Caco-2 (cell line): ENCODE measurements at regions of chr1 and their contacts with region 1.

Region 1: GRCh38 chr1:43171876-43172526 is at the starts of genes CFAP57 and EBNA1BP2:
- DNase-seq: peak; percentile 87 to 90
- H3K4me3 ChIP-seq: peak within 1 kb of the TSS; percentile 83
- H3K4me3 Mint-ChIP-seq: peak within 1 kb of the TSS; percentile 99
- H3K27ac Mint-ChIP-seq: peak within 1 kb of the TSS; percentile 99
- H3K4me1 ChIP-seq: peaks cover 3% of the 10 kb centered on the region
- H3K4me1 Mint-ChIP-seq: peaks cover 7% of the 10 kb centered on the region
- H3K27me3 ChIP-seq: no peaks in the 10 kb centered on the region
- H3K27me3 Mint-ChIP-seq: peaks cover 11% of the 10 kb centered on the region
- CTCF ChIP-seq: no peak
- total RNA-seq, gene CFAP57: 0.23 and 0.35 TPM in 2 replicates
- total RNA-seq, gene EBNA1BP2: 56.3 and 61.6 TPM in 2 replicates

Region 2: GRCh38 chr1:42793824-42794223 is 378.2 kb before region 1 on chr1:
- CTCF ChIA-PET with region 1: no interaction called
- POLR2A ChIA-PET with region 1: no interaction called
- intact Hi-C with region 1: no loop called
- DNase-seq: no peak
- H3K4me3 ChIP-seq: no peak overlapping the region
- H3K4me3 Mint-ChIP-seq: no peak overlapping the region
- H3K27ac Mint-ChIP-seq: no peak overlapping the region
- H3K4me1 ChIP-seq: no peaks in the 10 kb centered on the region
- H3K4me1 Mint-ChIP-seq: no peaks in the 10 kb centered on the region
- H3K27me3 ChIP-seq: no peaks in the 10 kb centered on the region
- H3K27me3 Mint-ChIP-seq: no peaks in the 10 kb centered on the region
- CTCF ChIP-seq: no peak

Region 3: DNA sequence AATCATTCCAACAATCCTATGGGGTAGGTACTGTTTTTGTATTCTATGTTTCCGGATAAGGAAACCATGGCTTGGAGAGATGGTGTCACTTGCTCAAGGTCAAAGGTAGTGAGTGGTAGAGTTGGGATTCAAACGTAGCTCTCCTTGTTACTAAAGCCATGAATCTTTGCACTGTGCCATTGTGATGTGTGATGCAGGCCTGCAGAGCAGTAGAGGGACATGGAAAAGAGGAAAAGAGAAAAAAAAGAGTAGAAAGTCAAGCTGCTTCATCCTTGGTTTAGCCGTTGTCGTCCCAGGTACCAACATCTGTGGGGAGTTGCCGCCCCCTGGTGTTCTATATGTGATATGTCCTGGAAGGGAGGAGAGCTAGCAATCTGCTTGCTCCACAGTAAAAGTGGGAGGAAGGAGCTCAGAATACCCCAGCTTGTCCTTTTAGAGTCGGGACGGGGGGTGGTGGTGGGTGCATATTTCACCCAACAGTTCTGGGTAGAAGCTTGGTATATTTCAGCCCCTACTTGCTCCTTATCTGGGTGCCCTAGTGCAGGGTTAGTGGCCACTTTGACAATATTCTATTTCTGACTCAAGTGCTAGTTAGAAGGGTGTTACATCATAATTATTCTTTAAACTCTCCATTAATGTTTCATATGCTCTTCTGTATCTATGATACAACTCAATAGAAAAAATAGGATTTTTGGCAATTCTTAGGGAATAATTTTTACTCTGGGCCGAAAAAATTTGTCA is 98.3 kb before region 1 on chr1:
- CTCF ChIA-PET with region 1: no interaction called
- POLR2A ChIA-PET with region 1: no interaction called
- intact Hi-C with region 1: no loop called
- DNase-seq: peak; percentile 79 to 80
- H3K4me3 ChIP-seq: no peak overlapping the region
- H3K4me3 Mint-ChIP-seq: no peak overlapping the region
- H3K27ac Mint-ChIP-seq: no peak overlapping the region
- H3K4me1 ChIP-seq: peaks cover 52% of the 10 kb centered on the region
- H3K4me1 Mint-ChIP-seq: peaks cover 36% of the 10 kb centered on the region
- H3K27me3 ChIP-seq: no peaks in the 10 kb centered on the region
- H3K27me3 Mint-ChIP-seq: no peaks in the 10 kb centered on the region
- CTCF ChIP-seq: peak; percentile 63 to 83

Region 4: GRCh38 chr1:43107664-43108063 is 64.3 kb before region 1 on chr1:
- CTCF ChIA-PET with region 1: no interaction called
- POLR2A ChIA-PET with region 1: no interaction called
- intact Hi-C with region 1: no loop called
- DNase-seq: no peak
- H3K4me3 ChIP-seq: no peak overlapping the region
- H3K4me3 Mint-ChIP-seq: no peak overlapping the region
- H3K27ac Mint-ChIP-seq: no peak overlapping the region
- H3K4me1 ChIP-seq: no peaks in the 10 kb centered on the region
- H3K4me1 Mint-ChIP-seq: no peaks in the 10 kb centered on the region
- H3K27me3 ChIP-seq: no peaks in the 10 kb centered on the region
- H3K27me3 Mint-ChIP-seq: no peaks in the 10 kb centered on the region
- CTCF ChIP-seq: no peak

Region 5: DNA sequence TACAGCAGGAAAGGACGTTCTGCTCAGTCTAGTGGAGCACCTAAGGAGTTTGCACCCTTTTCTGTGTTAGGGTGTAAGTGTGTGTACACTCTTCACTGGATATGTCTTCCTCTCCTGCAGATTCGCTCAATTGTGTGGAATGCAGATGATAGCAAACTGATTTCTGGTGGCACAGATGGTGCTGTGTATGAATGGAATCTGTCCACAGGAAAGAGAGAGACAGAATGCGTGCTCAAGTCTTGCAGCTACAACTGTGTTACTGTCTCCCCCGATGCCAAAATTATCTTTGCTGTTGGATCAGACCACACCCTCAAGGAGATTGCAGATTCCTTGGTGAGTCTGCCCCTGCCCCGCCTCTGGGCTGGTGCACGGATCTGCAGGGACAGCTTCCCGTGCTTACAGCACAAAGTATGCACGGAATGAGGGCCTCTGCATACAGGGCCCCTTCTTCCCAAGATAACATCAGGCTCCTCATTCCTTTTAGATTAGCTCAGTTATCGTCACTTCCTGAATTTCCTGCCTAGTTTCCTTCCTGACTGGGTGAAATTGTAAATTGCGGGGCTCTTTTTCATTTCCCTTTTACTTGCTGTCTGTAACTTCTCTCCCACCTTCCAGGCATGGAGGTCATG is 34.7 kb after region 1 on chr1:
- CTCF ChIA-PET with region 1: interaction called, 3 read pairs
- POLR2A ChIA-PET with region 1: interaction called, 17 read pairs
- intact Hi-C with region 1: loop called (anchors 1 kb)
- DNase-seq: peak; percentile 89 to 95
- H3K4me3 ChIP-seq: no peak overlapping the region
- H3K4me3 Mint-ChIP-seq: peak overlapping the region; percentile 53
- H3K27ac Mint-ChIP-seq: peak overlapping the region; percentile 93
- H3K4me1 ChIP-seq: peaks cover 32% of the 10 kb centered on the region
- H3K4me1 Mint-ChIP-seq: no peaks in the 10 kb centered on the region
- H3K27me3 ChIP-seq: no peaks in the 10 kb centered on the region
- H3K27me3 Mint-ChIP-seq: no peaks in the 10 kb centered on the region
- CTCF ChIP-seq: no peak